ENCODE measurements at regions of chr6 and their contacts with region 1.

Region 1: GRCh38 chr6:30102970-30103874 is 9.7 kb downstream of the TRIM31 start:
- DNase-seq: peak; percentile 95
- H3K4me3 ChIP-seq: peak overlapping the region; percentile 30 to 45 (median 38)
- H3K27ac ChIP-seq: peak overlapping the region; percentile 59 to 77 (median 70)
- H3K4me1 ChIP-seq: peaks cover 0 to 36% (median 32%) of the 10 kb centered on the region in 4 donors
- H3K27me3 ChIP-seq: peaks cover 19 to 54% (median 31%) of the 10 kb centered on the region in 3 donors
- CTCF ChIP-seq: peak; percentile 85 to 95 (median 92)
- EP300 ChIP-seq: no peak
- POLR2A ChIP-seq: no peak

Region 2: DNA sequence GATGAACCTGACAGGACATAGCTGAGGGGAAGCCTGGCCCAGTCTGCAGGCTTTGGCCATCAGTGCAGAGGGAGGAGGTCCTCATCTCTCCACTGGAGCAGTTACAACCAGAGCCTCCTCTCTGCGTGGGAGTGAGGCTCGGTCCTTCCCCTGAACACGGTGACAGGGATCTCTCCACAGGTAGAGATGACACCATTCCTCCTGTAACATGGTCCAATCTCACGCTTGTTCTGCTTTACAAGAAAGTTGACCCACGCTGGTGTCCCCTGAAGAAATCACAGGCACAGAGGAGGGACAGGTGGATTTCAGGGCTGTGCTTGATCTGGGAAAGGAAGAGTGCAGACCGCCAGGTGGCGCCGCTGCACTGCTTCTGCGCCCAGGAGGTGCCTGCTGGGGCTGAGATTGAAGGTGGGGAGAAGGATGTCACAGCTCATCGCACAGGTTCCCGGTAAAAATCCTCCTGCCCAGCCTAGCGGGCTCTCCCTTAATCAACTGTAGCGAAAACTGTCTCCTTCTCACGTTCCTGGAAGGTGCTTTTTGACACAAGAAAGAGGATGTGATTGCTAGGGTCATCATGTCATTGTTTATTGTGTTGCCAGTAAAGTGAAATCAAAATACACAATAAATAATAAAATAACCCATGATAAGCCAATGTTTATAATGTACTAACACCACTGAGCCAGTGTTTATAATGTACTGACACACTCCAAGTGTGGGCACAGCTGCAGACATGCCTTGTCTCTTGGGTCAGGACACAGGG is 255.2 kb before region 1 on chr6:
- intact Hi-C with region 1: loop called (anchors 10 kb)
- DNase-seq: peak; percentile 87
- H3K4me3 ChIP-seq: no peak overlapping the region
- H3K27ac ChIP-seq: no peak overlapping the region
- H3K4me1 ChIP-seq: peaks cover 0 to 4% (median 2%) of the 10 kb centered on the region in 4 donors
- H3K27me3 ChIP-seq: peaks cover 0 to 42% (median 12%) of the 10 kb centered on the region in 3 donors
- CTCF ChIP-seq: peak; percentile 79 to 94 (median 93)
- EP300 ChIP-seq: no peak
- POLR2A ChIP-seq: no peak

Region 3: GRCh38 chr6:30066577-30067459 is 36.4 kb before region 1 on chr6 and contains the start of gene PPP1R11:
- intact Hi-C with region 1: loop called (anchors 5 kb)
- DNase-seq: peak; percentile 100
- H3K4me3 ChIP-seq: peak within 1 kb of the TSS; percentile 52 to 80 (median 62)
- H3K27ac ChIP-seq: peak within 1 kb of the TSS; percentile 81 to 93 (median 88)
- H3K4me1 ChIP-seq: peaks cover 0 to 42% (median 37%) of the 10 kb centered on the region in 4 donors
- H3K27me3 ChIP-seq: peaks cover 5 to 27% (median 16%) of the 10 kb centered on the region in 3 donors
- CTCF ChIP-seq: no peak
- EP300 ChIP-seq: peak in 1 of 4 donors; percentile 91
- POLR2A ChIP-seq: peak; percentile 86 to 93
- total RNA-seq, gene PPP1R11: 36.8 to 45.7 (median 42.2) TPM

Region 4: GRCh38 chr6:30130887-30131862 is 28.0 kb after region 1 on chr6:
- intact Hi-C with region 1: loop called (anchors 1 kb)
- DNase-seq: peak; percentile 82
- H3K4me3 ChIP-seq: no peak overlapping the region
- H3K27ac ChIP-seq: no peak overlapping the region
- H3K4me1 ChIP-seq: peaks cover 0 to 12% (median 10%) of the 10 kb centered on the region in 4 donors
- H3K27me3 ChIP-seq: peaks cover 40 to 92% (median 42%) of the 10 kb centered on the region in 3 donors
- CTCF ChIP-seq: peak; percentile 93 to 97 (median 96)
- EP300 ChIP-seq: no peak
- POLR2A ChIP-seq: no peak

Region 5: DNA sequence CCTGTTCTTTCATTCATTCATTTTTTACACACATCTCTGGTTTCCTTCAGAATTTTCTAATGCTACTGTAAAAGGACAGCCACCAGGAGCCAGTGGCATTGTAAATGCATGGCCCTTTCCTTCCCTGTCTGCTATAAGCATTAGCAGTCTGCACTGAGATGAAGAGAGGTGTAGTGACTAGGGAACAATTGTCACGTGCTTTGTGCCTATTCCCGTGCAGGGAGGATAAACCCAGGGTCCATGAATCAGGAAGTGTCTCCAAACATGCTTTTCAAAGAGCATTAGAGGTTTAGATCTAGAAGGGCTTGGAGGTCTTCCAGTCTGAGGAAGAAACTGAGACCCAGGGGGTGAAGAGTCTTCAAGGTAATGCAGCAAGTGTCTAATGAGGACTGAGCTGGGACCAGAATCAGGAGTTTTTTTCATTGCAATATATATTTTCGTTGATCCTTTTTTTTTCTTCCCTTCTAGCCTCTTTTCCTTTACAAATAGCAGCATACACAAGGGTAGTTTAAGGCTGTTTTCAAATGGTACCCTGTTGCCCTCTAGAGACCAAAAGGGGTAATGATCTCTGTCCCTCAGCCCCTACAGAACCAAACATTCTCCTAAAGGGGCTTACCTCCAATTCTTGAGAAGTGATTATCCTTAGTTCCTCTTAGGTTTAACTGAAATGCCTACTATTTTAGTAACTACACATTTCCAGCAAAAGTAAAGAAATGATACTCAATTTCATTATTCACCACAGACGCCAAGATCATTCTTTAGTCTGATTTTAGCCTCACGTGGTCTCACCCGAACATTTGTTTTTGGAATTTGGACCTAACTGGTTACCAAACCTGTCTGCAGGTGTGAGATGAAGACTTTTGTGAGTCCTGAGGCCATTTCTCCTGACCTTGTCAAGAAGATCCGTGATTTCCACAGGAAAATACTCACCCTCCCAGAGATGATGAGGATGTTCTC is 66.7 kb after region 1 on chr6:
- intact Hi-C with region 1: loop called (anchors 2 kb)
- DNase-seq: no peak
- H3K4me3 ChIP-seq: no peak overlapping the region
- H3K27ac ChIP-seq: no peak overlapping the region
- H3K4me1 ChIP-seq: peaks cover 0 to 9% (median 7%) of the 10 kb centered on the region in 4 donors
- H3K27me3 ChIP-seq: peaks cover 23 to 63% (median 34%) of the 10 kb centered on the region in 3 donors
- CTCF ChIP-seq: peak in 3 of 4 experiments; percentile 52 to 61 (median 54)
- EP300 ChIP-seq: no peak
- POLR2A ChIP-seq: no peak

Region 6: DNA sequence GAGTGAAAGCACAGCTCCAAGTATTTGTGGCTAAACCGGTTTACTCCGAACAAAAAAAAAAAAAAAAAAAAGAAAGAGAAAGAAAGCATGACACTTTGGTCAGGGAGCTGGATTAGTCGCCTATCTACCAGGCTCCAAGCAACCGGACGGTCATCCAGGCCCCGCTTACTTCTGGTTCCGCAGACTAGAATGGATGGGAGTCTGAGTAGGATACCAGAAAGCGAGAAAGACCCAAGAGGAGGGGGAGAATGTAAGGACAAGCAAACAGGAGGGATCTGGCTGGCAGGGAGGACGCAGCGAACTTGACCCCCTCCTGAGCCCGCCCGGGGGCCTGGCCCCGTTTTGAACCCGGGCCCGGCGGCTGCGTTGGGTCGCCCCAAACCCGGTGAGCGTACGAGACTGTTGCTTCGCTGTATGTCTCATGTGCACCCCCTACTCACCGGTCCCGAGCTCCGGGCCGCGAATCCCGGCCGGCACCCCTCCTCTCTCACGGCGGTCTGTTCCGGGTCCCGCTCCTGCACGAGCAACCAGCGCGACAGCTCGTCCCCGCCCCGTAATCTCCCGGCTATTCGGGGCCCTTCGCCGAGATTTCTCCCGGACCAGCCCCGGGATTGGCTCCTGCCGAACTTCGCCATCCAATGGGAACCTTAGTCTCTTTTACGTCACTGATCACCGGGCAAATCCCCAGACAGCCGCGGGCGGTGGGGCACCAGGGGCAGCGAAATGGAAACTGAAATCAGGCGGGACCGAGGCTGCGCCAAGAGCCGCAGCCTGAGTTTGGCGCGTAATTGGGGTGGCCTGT is 109.8 kb after region 1 on chr6 and contains the start of gene TRIM26:
- intact Hi-C with region 1: loop called (anchors 5 kb)
- DNase-seq: peak; percentile 99
- H3K4me3 ChIP-seq: peak within 1 kb of the TSS; percentile 91 to 96 (median 93)
- H3K27ac ChIP-seq: peak within 1 kb of the TSS; percentile 95 to 98 (median 98)
- H3K4me1 ChIP-seq: peaks cover 0 to 43% (median 34%) of the 10 kb centered on the region in 4 donors
- H3K27me3 ChIP-seq: no peaks in the 10 kb centered on the region
- CTCF ChIP-seq: no peak
- EP300 ChIP-seq: no peak
- POLR2A ChIP-seq: peak; percentile 92 to 96
- total RNA-seq, gene TRIM26: 34.2 to 42.7 (median 41.4) TPM

Region 7: GRCh38 chr6:30344868-30345671 is 241.8 kb after region 1 on chr6 and contains the start of gene RPP21:
- intact Hi-C with region 1: loop called (anchors 10 kb)
- DNase-seq: peak; percentile 90
- H3K4me3 ChIP-seq: peak within 1 kb of the TSS; percentile 61 to 92 (median 82)
- H3K27ac ChIP-seq: peak within 1 kb of the TSS; percentile 84 to 96 (median 94)
- H3K4me1 ChIP-seq: peaks cover 0 to 15% (median 10%) of the 10 kb centered on the region in 4 donors
- H3K27me3 ChIP-seq: no peaks in the 10 kb centered on the region
- CTCF ChIP-seq: no peak
- EP300 ChIP-seq: no peak
- POLR2A ChIP-seq: peak; percentile 58 to 77
- total RNA-seq, gene RPP21: 134 to 150 (median 141) TPM